ENCODE measurements at regions of chr21 and their contacts with region 1.

Region 1: GRCh38 chr21:16194095-16194787 is 464.5 kb downstream of the USP25 start:
- DNase-seq: peak; percentile 65
- H3K4me3 Mint-ChIP-seq: peak overlapping the region; percentile 68
- H3K27ac Mint-ChIP-seq: peak overlapping the region; percentile 92
- H3K4me1 Mint-ChIP-seq: peaks cover 6% of the 10 kb centered on the region
- H3K27me3 Mint-ChIP-seq: no peaks in the 10 kb centered on the region
- CTCF ChIP-seq: no peak

Region 2: GRCh38 chr21:16117851-16118592 is 76.2 kb before region 1 on chr21:
- CTCF ChIA-PET with region 1: no interaction called
- POLR2A ChIA-PET with region 1: interaction called, 10 read pairs
- intact Hi-C with region 1: no loop called
- DNase-seq: peak; percentile 17
- H3K4me3 Mint-ChIP-seq: no peak overlapping the region
- H3K27ac Mint-ChIP-seq: no peak overlapping the region
- H3K4me1 Mint-ChIP-seq: no peaks in the 10 kb centered on the region
- H3K27me3 Mint-ChIP-seq: no peaks in the 10 kb centered on the region
- CTCF ChIP-seq: no peak

Region 3: DNA sequence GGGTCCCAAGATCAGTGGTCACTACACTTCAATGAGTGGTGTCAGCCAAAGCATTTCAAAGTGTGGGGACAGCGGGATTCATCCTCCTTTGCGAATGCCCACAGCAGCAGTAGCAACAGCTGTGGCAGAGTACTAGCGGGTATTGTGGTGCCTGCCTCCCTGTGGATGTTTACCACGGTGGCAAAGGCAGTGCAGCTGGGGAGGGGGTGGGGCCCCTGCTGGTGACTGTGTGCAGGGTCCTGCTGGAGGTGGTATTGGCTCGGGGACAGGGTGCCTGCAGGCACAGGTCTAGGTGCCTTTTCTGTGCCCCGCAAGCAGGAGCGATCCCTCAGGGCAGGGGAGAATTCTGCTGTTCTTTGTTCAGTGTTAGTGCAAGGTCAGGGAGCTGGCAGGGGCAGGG is 48.8 kb before region 1 on chr21:
- CTCF ChIA-PET with region 1: no interaction called
- POLR2A ChIA-PET with region 1: no interaction called
- intact Hi-C with region 1: no loop called
- DNase-seq: no peak
- H3K4me3 Mint-ChIP-seq: no peak overlapping the region
- H3K27ac Mint-ChIP-seq: no peak overlapping the region
- H3K4me1 Mint-ChIP-seq: no peaks in the 10 kb centered on the region
- H3K27me3 Mint-ChIP-seq: no peaks in the 10 kb centered on the region
- CTCF ChIP-seq: no peak

Region 4: DNA sequence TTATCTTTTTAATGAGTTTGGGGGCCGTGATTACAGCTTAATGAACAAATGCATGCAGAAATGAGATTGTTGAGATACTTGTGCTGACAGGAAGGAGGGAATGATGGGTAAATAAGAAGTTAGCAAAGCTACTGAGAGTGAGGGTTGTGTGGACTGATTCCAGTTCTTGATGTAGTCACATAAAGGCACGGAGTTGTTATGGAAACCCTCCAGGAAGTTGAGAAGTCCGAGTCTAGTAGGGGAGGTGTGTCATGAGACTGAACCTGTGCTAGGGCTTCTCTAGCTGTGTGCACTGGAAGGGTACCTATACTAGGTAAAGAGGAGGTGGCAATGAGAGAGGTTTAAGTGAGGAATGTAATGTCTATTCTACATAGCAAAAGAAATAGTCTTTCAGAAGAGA is 11.3 kb after region 1 on chr21:
- CTCF ChIA-PET with region 1: interaction called, 5 read pairs
- POLR2A ChIA-PET with region 1: interaction called, 17 read pairs
- intact Hi-C with region 1: no loop called
- DNase-seq: no peak
- H3K4me3 Mint-ChIP-seq: no peak overlapping the region
- H3K27ac Mint-ChIP-seq: no peak overlapping the region
- H3K4me1 Mint-ChIP-seq: no peaks in the 10 kb centered on the region
- H3K27me3 Mint-ChIP-seq: peaks cover 83% of the 10 kb centered on the region
- CTCF ChIP-seq: no peak

Region 5: GRCh38 chr21:16308269-16308668 is 114.0 kb after region 1 on chr21:
- CTCF ChIA-PET with region 1: no interaction called
- POLR2A ChIA-PET with region 1: interaction called, 10 read pairs
- intact Hi-C with region 1: no loop called
- DNase-seq: peak; percentile 14
- H3K4me3 Mint-ChIP-seq: peak overlapping the region; percentile 14
- H3K27ac Mint-ChIP-seq: no peak overlapping the region
- H3K4me1 Mint-ChIP-seq: no peaks in the 10 kb centered on the region
- H3K27me3 Mint-ChIP-seq: peaks cover 64% of the 10 kb centered on the region
- CTCF ChIP-seq: no peak

Region 6: GRCh38 chr21:16388286-16388685 is 194.0 kb after region 1 on chr21:
- CTCF ChIA-PET with region 1: no interaction called
- POLR2A ChIA-PET with region 1: no interaction called
- intact Hi-C with region 1: no loop called
- DNase-seq: no peak
- H3K4me3 Mint-ChIP-seq: no peak overlapping the region
- H3K27ac Mint-ChIP-seq: no peak overlapping the region
- H3K4me1 Mint-ChIP-seq: peaks cover 8% of the 10 kb centered on the region
- H3K27me3 Mint-ChIP-seq: peaks cover 20% of the 10 kb centered on the region
- CTCF ChIP-seq: no peak

Region 7: DNA sequence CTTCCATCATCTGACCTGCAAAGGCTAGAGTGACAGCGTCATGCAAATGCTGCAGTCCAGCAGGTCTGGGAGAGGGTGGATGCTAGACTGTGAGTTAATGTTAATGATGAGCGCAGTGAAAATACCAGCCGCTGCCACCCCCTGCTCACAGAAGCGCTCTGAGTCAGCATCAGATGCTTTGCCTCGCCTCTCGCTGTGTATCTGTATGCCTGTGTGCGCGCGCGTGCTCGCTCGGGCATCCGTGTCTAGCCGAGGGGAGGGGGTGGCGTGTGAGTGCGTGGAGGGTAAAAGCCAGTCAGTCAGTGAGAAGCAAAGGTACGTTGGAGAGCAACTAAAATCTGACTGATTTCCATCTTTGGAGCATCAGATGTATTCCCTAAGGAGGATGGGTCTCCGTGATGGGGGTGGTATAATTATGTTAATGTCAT is 394.2 kb after region 1 on chr21:
- CTCF ChIA-PET with region 1: no interaction called
- POLR2A ChIA-PET with region 1: interaction called, 6 read pairs
- intact Hi-C with region 1: loop called (anchors 10 kb)
- DNase-seq: peak; percentile 79
- H3K4me3 Mint-ChIP-seq: no peak overlapping the region
- H3K27ac Mint-ChIP-seq: no peak overlapping the region
- H3K4me1 Mint-ChIP-seq: peaks cover 4% of the 10 kb centered on the region
- H3K27me3 Mint-ChIP-seq: no peaks in the 10 kb centered on the region
- CTCF ChIP-seq: no peak